PC-3 (cell line): ENCODE measurements at regions of chr3 and their contacts with region 1.

Region 1: GRCh38 chr3:27533718-27534573 is 49.8 kb upstream of the SLC4A7 start:
- DNase-seq: peak; percentile 99
- ATAC-seq: peak; percentile 85
- H3K4me3 ChIP-seq: peak overlapping the region; percentile 34; the same call in 1 of the 2 replicates
- H3K27ac ChIP-seq: peak overlapping the region; percentile 97
- H3K4me1 ChIP-seq: peaks cover 41% of the 10 kb centered on the region
- H3K27me3 ChIP-seq: no peaks in the 10 kb centered on the region
- CTCF ChIP-seq: peak; percentile 42; the same call in 1 of the 2 replicates

Region 2: DNA sequence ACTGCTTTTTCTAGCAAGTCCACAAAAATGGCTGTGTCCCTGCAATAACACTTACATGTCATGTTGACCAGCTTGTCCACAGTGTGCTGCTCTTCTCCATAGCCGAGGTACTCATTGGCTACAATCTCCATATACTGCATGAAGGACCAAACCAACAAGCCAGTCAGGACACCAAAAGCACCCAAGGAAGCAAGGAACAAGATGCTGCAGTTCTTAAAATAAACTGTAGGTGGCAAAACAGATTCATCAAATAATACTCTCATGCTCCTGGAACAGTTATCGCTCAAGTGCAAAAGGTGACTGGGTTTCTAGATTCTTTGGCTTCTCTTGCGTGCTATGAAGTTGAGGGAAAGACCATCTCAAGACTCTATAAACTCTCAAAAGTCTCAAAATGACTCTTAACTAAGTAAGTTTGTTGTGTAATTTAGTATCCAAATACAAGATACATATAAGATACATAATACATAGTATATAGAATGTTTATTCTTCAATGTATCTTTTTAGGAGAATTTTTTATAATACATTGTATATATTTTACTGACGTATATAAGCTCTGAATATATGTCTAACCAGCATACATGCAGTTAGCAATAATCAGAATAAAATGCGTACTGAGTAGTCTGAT is 221.8 kb before region 1 on chr3:
- CTCF ChIA-PET with region 1: no interaction called
- POLR2A ChIA-PET with region 1: no interaction called
- intact Hi-C with region 1: loop called (anchors 1 kb)
- DNase-seq: peak; percentile 86
- ATAC-seq: peak; percentile 76
- H3K4me3 ChIP-seq: no peak overlapping the region
- H3K27ac ChIP-seq: peak overlapping the region; percentile 16
- H3K4me1 ChIP-seq: peaks cover 20% of the 10 kb centered on the region
- H3K27me3 ChIP-seq: no peaks in the 10 kb centered on the region
- CTCF ChIP-seq: peak; percentile 87

Region 3: DNA sequence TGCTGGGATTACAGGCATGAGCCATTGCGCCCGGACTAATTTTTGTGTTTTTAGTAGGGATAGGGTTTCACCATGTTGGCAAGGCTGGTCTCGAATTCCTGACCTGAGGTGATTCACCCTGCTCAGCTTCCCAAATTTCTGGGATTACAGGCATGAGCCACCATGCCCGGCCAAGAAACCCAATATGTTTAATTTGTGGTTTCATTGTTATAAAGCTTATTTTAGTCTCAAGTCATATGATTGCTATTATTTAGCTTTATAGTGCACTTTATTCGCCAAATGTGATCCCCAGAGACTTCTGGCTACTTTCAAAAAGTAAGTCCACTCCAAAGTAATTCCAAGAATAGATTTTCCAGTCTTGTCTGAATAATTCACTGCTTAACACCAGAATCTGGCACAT is 30.4 kb before region 1 on chr3:
- CTCF ChIA-PET with region 1: no interaction called
- POLR2A ChIA-PET with region 1: no interaction called
- intact Hi-C with region 1: loop called (anchors 1 kb)
- DNase-seq: peak; percentile 92
- ATAC-seq: peak; percentile 81
- H3K4me3 ChIP-seq: no peak overlapping the region
- H3K27ac ChIP-seq: peak overlapping the region; percentile 57
- H3K4me1 ChIP-seq: peaks cover 36% of the 10 kb centered on the region
- H3K27me3 ChIP-seq: no peaks in the 10 kb centered on the region
- CTCF ChIP-seq: no peak

Region 4: GRCh38 chr3:27544372-27544865 is 10.5 kb after region 1 on chr3:
- CTCF ChIA-PET with region 1: no interaction called
- POLR2A ChIA-PET with region 1: interaction called, 3 read pairs
- intact Hi-C with region 1: loop called (anchors 1 kb)
- DNase-seq: peak; percentile 92
- ATAC-seq: peak; percentile 82
- H3K4me3 ChIP-seq: peak overlapping the region; percentile 11; the same call in 1 of the 2 replicates
- H3K27ac ChIP-seq: peak overlapping the region; percentile 73
- H3K4me1 ChIP-seq: peaks cover 25% of the 10 kb centered on the region
- H3K27me3 ChIP-seq: no peaks in the 10 kb centered on the region
- CTCF ChIP-seq: no peak

Region 5: DNA sequence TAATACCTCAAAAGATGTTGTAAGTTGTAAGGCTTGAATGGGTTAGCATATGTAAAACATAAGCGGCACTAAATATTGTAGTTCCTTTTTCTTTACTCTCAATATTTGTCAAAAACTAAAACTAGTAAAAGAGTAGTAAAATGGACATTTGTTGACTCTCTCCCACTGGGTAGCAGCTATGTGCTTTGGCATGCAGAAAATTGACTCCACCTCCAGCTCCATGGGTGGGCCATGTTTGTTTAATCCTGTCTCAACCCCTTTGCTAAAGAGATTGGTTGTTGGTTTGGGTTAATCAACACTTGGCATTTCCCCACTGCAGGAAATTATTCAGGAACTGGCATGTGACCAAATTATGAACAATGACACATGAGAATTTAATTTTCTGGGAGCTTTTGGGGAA is 73.4 kb after region 1 on chr3:
- CTCF ChIA-PET with region 1: no interaction called
- POLR2A ChIA-PET with region 1: no interaction called
- intact Hi-C with region 1: loop called (anchors 1 kb)
- DNase-seq: peak; percentile 60
- ATAC-seq: peak; percentile 97
- H3K4me3 ChIP-seq: no peak overlapping the region
- H3K27ac ChIP-seq: peak overlapping the region; percentile 29
- H3K4me1 ChIP-seq: peaks cover 15% of the 10 kb centered on the region
- H3K27me3 ChIP-seq: no peaks in the 10 kb centered on the region
- CTCF ChIP-seq: no peak